H1 (cell line): ENCODE measurements at regions of chr5 and their contacts with region 1.

Region 1: GRCh38 chr5:154972476-154973080 is 31.7 kb downstream of the MRPL22 start:
- DNase-seq: peak in 1 of 2 experiments; percentile 51
- H3K4me3 ChIP-seq: no peak overlapping the region
- H3K27ac ChIP-seq: no peak overlapping the region
- H3K4me1 ChIP-seq: no peaks in the 10 kb centered on the region
- H3K27me3 ChIP-seq: no peaks in the 10 kb centered on the region
- CTCF ChIP-seq: peak; percentile 52 to 84 (median 80)
- EP300 ChIP-seq: no peak
- POLR2A ChIP-seq: no peak
- RAD21 ChIP-seq: peak; percentile 87 to 88

Region 2: GRCh38 chr5:154410786-154411185 is 561.8 kb before region 1 on chr5:
- CTCF ChIA-PET with region 1: interaction called, 11 read pairs
- POLR2A ChIA-PET with region 1: no interaction called
- DNase-seq: no peak
- H3K4me3 ChIP-seq: no peak overlapping the region
- H3K27ac ChIP-seq: no peak overlapping the region
- H3K4me1 ChIP-seq: no peaks in the 10 kb centered on the region; a peak in 1 of 7 replicates
- H3K27me3 ChIP-seq: no peaks in the 10 kb centered on the region
- CTCF ChIP-seq: no peak
- EP300 ChIP-seq: no peak
- POLR2A ChIP-seq: no peak
- RAD21 ChIP-seq: no peak

Region 3: DNA sequence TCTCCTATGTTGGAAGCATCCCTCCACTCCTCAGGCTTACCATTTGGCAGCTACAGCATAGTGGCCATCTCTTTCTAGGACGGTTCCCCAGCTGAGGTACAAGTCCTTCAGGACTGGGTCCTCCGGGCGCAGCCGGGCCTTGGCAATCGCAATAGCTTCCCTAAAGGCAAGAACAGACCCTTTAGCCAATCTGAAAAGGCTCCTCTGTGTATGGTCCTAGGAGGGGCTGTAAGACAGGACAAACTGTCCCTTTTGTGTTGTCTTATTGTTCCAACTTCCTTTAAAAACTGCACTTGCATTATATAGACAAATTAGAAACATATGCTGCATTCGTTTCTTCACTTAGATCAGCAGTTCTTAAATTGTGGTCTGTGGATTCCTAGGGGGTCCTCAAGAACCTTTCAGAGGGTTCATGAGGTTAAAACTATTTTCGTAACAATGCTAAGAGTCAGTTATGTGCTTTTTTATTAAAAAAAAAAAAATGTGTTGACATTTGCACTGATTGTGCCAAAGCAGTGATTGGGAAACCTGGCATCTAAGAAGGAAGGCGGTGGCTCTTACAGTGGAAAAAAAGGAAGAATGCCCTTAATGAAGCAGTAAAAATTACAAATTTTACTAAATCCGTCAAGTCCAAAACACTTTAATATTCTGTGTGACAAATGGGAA is 73.3 kb before region 1 on chr5:
- CTCF ChIA-PET with region 1: no interaction called
- POLR2A ChIA-PET with region 1: no interaction called
- DNase-seq: no peak
- H3K4me3 ChIP-seq: no peak overlapping the region
- H3K27ac ChIP-seq: no peak overlapping the region
- H3K4me1 ChIP-seq: no peaks in the 10 kb centered on the region
- H3K27me3 ChIP-seq: no peaks in the 10 kb centered on the region
- CTCF ChIP-seq: no peak
- EP300 ChIP-seq: no peak
- POLR2A ChIP-seq: no peak
- RAD21 ChIP-seq: no peak

Region 4: GRCh38 chr5:154962494-154962893 is 10.1 kb before region 1 on chr5:
- CTCF ChIA-PET with region 1: interaction called, 12 read pairs
- POLR2A ChIA-PET with region 1: no interaction called
- DNase-seq: no peak
- H3K4me3 ChIP-seq: no peak overlapping the region
- H3K27ac ChIP-seq: no peak overlapping the region
- H3K4me1 ChIP-seq: no peaks in the 10 kb centered on the region
- H3K27me3 ChIP-seq: no peaks in the 10 kb centered on the region
- CTCF ChIP-seq: no peak
- EP300 ChIP-seq: no peak
- POLR2A ChIP-seq: no peak
- RAD21 ChIP-seq: no peak

Region 5: GRCh38 chr5:155004138-155004744 is 31.7 kb after region 1 on chr5:
- CTCF ChIA-PET with region 1: interaction called, 471 read pairs
- POLR2A ChIA-PET with region 1: no interaction called
- DNase-seq: peak in 1 of 2 experiments; percentile 80
- H3K4me3 ChIP-seq: no peak overlapping the region
- H3K27ac ChIP-seq: no peak overlapping the region
- H3K4me1 ChIP-seq: peaks cover 0 to 1% (median under 1%) of the 10 kb centered on the region in 4 experiments; a peak in 3 of 7 replicates
- H3K27me3 ChIP-seq: no peaks in the 10 kb centered on the region
- CTCF ChIP-seq: peak; percentile 84 to 93 (median 91)
- EP300 ChIP-seq: no peak
- POLR2A ChIP-seq: no peak
- RAD21 ChIP-seq: peak; percentile 86 to 88

Region 6: GRCh38 chr5:155260798-155261197 is 288.2 kb after region 1 on chr5:
- CTCF ChIA-PET with region 1: interaction called, 14 read pairs
- POLR2A ChIA-PET with region 1: no interaction called
- DNase-seq: peak; percentile 39 to 51
- H3K4me3 ChIP-seq: no peak overlapping the region
- H3K27ac ChIP-seq: no peak overlapping the region
- H3K4me1 ChIP-seq: no peaks in the 10 kb centered on the region; a peak in 1 of 7 replicates
- H3K27me3 ChIP-seq: no peaks in the 10 kb centered on the region
- CTCF ChIP-seq: peak; percentile 28 to 81 (median 76)
- EP300 ChIP-seq: no peak
- POLR2A ChIP-seq: no peak
- RAD21 ChIP-seq: peak; percentile 78 to 87